ENCODE measurements at regions of chr1 and their contacts with region 1.

Region 1: GRCh38 chr1:79264975-79265818 is 258.7 kb upstream of the ADGRL4 start:
- DNase-seq: no peak
- H3K4me3 Mint-ChIP-seq: no peak overlapping the region
- H3K27ac Mint-ChIP-seq: no peak overlapping the region
- H3K4me1 Mint-ChIP-seq: no peaks in the 10 kb centered on the region
- H3K27me3 Mint-ChIP-seq: no peaks in the 10 kb centered on the region
- CTCF ChIP-seq: no peak

Region 2: DNA sequence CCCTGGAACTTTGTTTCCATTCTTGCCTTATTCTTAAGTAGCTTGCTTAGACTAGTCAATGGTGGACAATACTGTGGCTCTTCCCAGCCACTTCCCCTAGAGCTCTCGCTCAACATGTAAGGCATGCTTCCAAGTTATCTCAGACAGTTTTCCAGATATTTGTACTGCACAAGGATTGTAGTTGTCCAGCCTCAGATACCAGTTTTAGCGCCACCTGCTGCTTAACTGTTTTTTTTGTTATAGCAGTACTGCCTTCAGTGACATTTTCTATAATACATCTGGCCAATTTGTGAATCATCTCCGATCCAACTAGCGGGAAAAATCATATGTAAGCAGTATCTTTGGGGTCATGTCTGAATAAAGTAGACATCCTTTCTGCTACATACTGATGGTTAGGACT is 88.0 kb after region 1 on chr1:
- CTCF ChIA-PET with region 1: interaction called, 14 read pairs
- POLR2A ChIA-PET with region 1: interaction called, 4 read pairs
- intact Hi-C with region 1: no loop called
- DNase-seq: peak; percentile 66
- H3K4me3 Mint-ChIP-seq: no peak overlapping the region
- H3K27ac Mint-ChIP-seq: no peak overlapping the region
- H3K4me1 Mint-ChIP-seq: peaks cover 8% of the 10 kb centered on the region
- H3K27me3 Mint-ChIP-seq: no peaks in the 10 kb centered on the region
- CTCF ChIP-seq: peak; percentile 51